ENCODE measurements at regions of chr3 and their contacts with region 1.

Region 1: DNA sequence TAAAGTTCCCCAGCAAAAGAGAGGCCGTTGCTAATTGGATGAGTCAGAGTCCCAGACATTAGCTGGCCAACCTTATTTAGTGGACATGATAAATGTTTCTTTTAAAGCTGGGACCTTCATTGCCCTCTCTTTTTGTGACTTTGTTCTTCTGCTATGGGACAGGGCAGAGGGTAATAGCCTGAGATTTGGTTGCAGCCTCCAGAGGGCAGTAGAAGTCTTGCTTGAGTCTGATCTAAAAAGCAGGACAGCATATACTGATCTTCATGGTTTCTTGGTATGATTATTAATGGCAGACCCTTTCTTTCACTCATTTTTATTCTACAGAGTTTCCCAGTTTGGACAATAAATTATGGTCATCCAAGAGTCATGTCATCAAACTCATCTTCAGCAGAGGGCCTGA is 25.1 kb upstream of the ZKSCAN7 start:
- DNase-seq: no peak
- ATAC-seq: no peak
- H3K4me3 ChIP-seq: no peak overlapping the region
- H3K27ac ChIP-seq: no peak overlapping the region
- H3K4me1 ChIP-seq: no peaks in the 10 kb centered on the region
- H3K27me3 ChIP-seq: peaks cover 25% of the 10 kb centered on the region
- CTCF ChIP-seq: no peak

Region 2: DNA sequence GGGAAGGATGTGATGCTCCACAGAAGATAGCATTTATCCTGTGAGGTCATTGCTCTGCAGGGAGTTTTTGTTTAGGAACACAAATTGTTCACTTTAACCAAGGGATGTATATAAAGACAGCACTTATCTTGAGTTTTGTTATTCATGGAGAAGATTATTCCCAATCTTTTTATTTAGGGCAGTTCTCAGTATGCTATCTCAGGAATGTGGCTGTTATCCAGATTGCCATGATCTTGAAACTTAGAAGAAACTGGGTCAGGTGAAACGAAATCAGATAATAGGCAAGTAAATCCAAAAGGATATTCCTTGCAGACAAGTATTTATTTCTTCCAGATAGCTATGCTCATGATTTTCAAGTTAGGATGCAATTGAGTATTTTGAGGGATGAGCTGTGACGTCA is 312.4 kb after region 1 on chr3:
- intact Hi-C with region 1: no loop called
- DNase-seq: no peak
- ATAC-seq: no peak
- H3K4me3 ChIP-seq: no peak overlapping the region
- H3K27ac ChIP-seq: no peak overlapping the region
- H3K4me1 ChIP-seq: no peaks in the 10 kb centered on the region
- H3K27me3 ChIP-seq: no peaks in the 10 kb centered on the region
- CTCF ChIP-seq: no peak

Region 3: DNA sequence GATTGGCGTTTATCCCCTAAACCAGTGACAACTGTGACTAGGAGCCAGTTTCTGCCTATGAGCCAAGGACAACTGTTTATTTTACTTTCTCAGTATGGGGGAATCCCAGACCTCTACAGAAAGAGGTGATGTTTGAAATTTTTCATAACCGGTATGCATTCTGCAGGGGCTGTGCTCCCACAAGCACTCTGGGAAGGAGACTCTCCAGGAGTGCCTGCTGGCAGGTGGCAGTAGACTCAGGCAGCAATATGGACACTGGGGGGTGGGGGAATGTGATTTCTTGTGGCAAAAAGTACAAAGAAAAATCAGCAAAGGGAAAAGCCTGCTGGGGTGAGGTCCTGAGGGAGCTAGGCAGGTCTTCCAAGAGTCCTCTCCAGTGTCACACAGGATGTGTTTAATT is 350.4 kb after region 1 on chr3:
- intact Hi-C with region 1: no loop called
- DNase-seq: no peak
- ATAC-seq: no peak
- H3K4me3 ChIP-seq: no peak overlapping the region
- H3K27ac ChIP-seq: no peak overlapping the region
- H3K4me1 ChIP-seq: no peaks in the 10 kb centered on the region
- H3K27me3 ChIP-seq: no peaks in the 10 kb centered on the region
- CTCF ChIP-seq: no peak

Region 4: DNA sequence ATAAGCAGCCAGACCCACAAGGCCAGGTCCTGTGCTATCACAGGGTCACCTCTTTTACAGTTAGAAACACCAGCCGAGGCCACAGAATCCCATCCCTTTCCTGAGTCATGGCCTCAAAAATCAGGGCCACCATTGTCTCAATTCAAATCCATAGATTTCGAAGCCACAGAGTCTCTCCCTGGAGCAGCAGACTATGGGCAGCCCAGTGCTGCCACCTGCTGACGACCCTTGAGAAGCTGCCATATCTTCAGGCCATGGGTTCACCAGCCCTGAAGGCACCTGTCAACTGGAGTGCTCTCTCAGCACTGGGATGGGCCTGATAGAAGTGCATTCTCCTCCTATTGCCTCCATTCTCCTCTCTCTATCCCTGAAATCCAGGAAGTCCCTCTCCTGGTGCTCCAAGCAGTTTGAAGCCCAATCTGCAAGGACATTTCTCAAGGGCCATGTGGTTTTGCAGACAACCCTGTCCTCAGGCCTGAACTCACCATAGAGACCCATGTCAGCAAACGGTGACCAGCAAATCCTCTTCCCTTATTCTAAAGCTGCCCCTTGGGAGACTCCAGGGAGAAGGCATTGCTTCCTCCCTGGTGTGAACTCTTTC is 384.0 kb after region 1 on chr3:
- intact Hi-C with region 1: loop called (anchors 10 kb)
- DNase-seq: peak; percentile 77
- ATAC-seq: peak; percentile 83 to 85
- H3K4me3 ChIP-seq: no peak overlapping the region
- H3K27ac ChIP-seq: no peak overlapping the region
- H3K4me1 ChIP-seq: peaks cover 15% of the 10 kb centered on the region
- H3K27me3 ChIP-seq: no peaks in the 10 kb centered on the region
- CTCF ChIP-seq: peak; percentile 81